Activated T-helper 2 cell treated with anti-CD3 and anti-CD28 coated beads, Interferon-gamma antibody, Interleukin-2, Interleukin-4, amounts not matched to agents 10 μg/mL and 5 μg/mL and 100 μg/mL, durations not matched to agents 14 hours and 24 hours and 36 hours (primary cell): ENCODE measurements at regions of chr6 and their contacts with region 1.

Region 1: GRCh38 chr6:118923035-118923434 is 11.9 kb downstream of the MCM9 start:
- DNase-seq: no peak
- H3K4me3 Mint-ChIP-seq: no peak overlapping the region
- H3K27ac Mint-ChIP-seq: no peak overlapping the region
- H3K4me1 Mint-ChIP-seq: peaks cover 10% of the 10 kb centered on the region
- H3K27me3 Mint-ChIP-seq: no peaks in the 10 kb centered on the region

Region 2: GRCh38 chr6:118787724-118788423 is 135.2 kb before region 1 on chr6:
- intact Hi-C with region 1: no loop called
- DNase-seq: no peak
- H3K4me3 Mint-ChIP-seq: no peak overlapping the region
- H3K27ac Mint-ChIP-seq: no peak overlapping the region
- H3K4me1 Mint-ChIP-seq: peaks cover 17% of the 10 kb centered on the region
- H3K27me3 Mint-ChIP-seq: peaks cover 1% of the 10 kb centered on the region

Region 3: DNA sequence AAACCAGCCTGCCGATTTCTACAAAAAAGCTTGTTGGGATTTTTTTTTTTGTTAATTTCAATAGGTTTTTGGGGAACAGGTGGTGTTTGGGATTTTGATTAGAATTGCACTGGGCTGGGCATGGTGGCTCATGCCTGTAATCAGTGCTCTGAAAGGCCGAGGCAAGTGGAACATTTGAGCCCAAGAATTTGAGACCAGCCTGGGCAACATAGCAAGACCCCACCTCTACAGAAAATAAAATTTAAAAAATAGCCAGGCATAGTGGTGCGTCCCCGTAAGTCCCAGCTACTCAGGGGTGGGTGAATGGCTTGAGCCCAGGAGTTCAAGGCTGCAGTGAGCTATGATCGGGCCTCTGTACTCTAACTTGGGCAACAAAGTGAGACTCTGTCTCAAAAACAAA is 69.6 kb before region 1 on chr6:
- intact Hi-C with region 1: no loop called
- DNase-seq: no peak
- H3K4me3 Mint-ChIP-seq: no peak overlapping the region
- H3K27ac Mint-ChIP-seq: no peak overlapping the region
- H3K4me1 Mint-ChIP-seq: peaks cover 5% of the 10 kb centered on the region
- H3K27me3 Mint-ChIP-seq: no peaks in the 10 kb centered on the region

Region 4: GRCh38 chr6:118908441-118908840 is 14.6 kb before region 1 on chr6:
- intact Hi-C with region 1: loop called (anchors 2 kb)
- DNase-seq: no peak
- H3K4me3 Mint-ChIP-seq: no peak overlapping the region
- H3K27ac Mint-ChIP-seq: no peak overlapping the region
- H3K4me1 Mint-ChIP-seq: peaks cover 23% of the 10 kb centered on the region
- H3K27me3 Mint-ChIP-seq: no peaks in the 10 kb centered on the region